MCF 10A (cell line): ENCODE measurements at regions of chr12 and their contacts with region 1.

Region 1: GRCh38 chr12:111584959-111585358 is 14.2 kb downstream of the ATXN2 start:
- DNase-seq: peak; percentile 63
- H3K4me3 Mint-ChIP-seq: no peak overlapping the region
- H3K27ac Mint-ChIP-seq: peak overlapping the region; percentile 12
- H3K4me1 Mint-ChIP-seq: no peaks in the 10 kb centered on the region
- H3K27me3 Mint-ChIP-seq: no peaks in the 10 kb centered on the region
- CTCF ChIP-seq: no peak

Region 2: DNA sequence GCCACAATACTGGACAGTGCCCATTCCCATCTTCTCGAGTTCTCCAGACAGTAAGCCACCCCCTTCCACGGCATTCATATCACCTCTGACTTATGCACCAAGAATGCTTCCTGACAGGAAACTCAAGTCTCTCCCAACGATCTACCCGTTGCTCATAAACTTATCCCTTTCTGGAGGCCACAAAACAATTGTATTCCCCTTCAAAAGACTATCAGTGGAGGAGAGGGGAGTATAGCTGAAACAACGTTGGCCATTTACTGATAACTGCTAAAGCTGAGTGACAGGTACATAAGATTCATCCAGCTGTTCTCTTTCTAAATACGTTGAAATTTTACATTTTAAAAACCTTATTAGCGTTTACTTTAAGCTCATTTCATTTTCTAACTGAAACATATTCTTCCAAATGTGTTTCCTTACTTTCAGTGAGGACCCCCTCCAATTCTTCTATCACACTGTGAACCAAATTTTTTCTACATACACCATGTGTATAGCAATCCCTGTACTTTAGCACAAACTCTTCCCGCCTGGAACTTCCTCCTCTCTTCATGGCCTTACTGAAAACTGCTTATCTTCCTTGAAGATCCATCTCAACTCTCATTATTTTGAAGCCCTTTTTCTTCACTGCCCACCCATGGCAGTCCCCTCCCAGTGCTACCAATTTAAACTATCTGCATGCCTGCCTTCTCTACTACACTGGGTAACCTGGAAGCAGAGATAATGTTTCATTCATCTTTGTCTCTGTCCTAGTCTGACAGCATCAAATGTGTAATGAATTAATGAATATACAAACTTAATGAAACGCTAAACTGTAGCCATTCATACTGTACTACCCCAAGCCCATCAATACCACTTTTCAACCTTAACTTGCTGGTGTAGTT is 14.6 kb before region 1 on chr12:
- CTCF ChIA-PET with region 1: interaction called, 7 read pairs
- POLR2A ChIA-PET with region 1: interaction called, 17 read pairs
- intact Hi-C with region 1: no loop called
- DNase-seq: peak; percentile 63
- H3K4me3 Mint-ChIP-seq: peak overlapping the region; percentile 22
- H3K27ac Mint-ChIP-seq: no peak overlapping the region
- H3K4me1 Mint-ChIP-seq: peaks cover 34% of the 10 kb centered on the region
- H3K27me3 Mint-ChIP-seq: no peaks in the 10 kb centered on the region
- CTCF ChIP-seq: no peak

Region 3: GRCh38 chr12:111596990-111597830 is 12.3 kb after region 1 on chr12:
- CTCF ChIA-PET with region 1: no interaction called
- POLR2A ChIA-PET with region 1: interaction called, 18 read pairs
- intact Hi-C with region 1: no loop called
- DNase-seq: peak; percentile 73
- H3K4me3 Mint-ChIP-seq: peak overlapping the region; percentile 84
- H3K27ac Mint-ChIP-seq: peak overlapping the region; percentile 73
- H3K4me1 Mint-ChIP-seq: peaks cover 20% of the 10 kb centered on the region
- H3K27me3 Mint-ChIP-seq: no peaks in the 10 kb centered on the region
- CTCF ChIP-seq: no peak

Region 4: DNA sequence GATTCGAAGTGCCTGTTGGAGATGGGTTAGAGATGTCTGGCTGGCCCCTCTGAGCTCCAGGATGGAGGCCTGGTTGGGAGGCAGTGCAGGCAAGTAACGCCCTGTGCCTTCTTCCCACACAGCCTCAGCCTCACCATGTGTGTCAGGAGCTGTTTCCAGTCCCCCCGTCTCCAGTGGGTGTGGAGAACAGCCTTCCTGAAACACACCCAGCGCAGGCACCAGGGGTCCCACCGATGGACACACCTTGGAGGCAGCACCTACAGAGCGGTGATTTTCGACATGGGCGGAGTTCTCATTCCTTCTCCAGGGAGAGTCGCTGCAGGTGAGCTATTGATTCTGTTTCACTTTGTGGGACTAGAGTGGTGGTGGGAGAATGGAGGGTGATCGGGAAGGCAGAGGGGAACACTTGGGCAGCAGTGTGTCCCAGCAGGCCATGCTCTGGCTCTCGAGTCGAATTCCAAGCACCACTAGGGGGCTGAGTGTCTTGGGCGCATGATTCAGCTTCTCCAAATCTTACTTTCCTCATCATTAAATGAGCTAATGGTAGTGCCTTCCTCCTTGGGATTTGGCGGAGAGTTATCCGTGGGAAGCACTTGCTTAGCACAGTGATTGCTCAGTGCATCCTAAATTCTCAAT is 107.7 kb after region 1 on chr12:
- CTCF ChIA-PET with region 1: no interaction called
- POLR2A ChIA-PET with region 1: no interaction called
- intact Hi-C with region 1: no loop called
- DNase-seq: peak; percentile 12
- H3K4me3 Mint-ChIP-seq: no peak overlapping the region
- H3K27ac Mint-ChIP-seq: no peak overlapping the region
- H3K4me1 Mint-ChIP-seq: peaks cover under 1% of the 10 kb centered on the region
- H3K27me3 Mint-ChIP-seq: no peaks in the 10 kb centered on the region
- CTCF ChIP-seq: peak; percentile 13